Activated CD8-positive, alpha-beta T cell treated with anti-CD3 and anti-CD28 coated beads for 36 hours (primary cell): ENCODE measurements at regions of chr7 and their contacts with region 1.

Region 1: DNA sequence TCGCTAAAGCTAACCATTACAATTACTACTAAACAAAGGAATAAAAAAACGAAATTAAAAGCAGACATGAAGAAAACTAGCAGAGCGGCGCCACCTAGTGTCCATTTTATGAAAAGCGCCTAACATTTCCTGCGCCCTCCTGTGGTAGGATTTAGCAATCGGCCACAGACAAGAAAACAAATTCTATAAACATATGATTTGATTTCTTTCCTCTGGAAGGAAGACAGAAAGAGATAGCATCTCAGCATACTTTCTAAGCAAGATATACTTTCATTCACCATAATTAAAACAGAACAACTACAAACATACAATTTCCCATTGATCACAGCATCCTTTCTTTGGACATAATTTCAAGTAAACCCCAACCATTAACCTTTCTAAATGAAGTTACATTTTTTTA is 337.7 kb upstream of the NPVF start:
- DNase-seq: peak; percentile 75
- ATAC-seq: peak; percentile 27
- H3K4me3 Mint-ChIP-seq: no peak overlapping the region
- H3K27ac Mint-ChIP-seq: no peak overlapping the region
- H3K4me1 Mint-ChIP-seq: peaks cover 1% of the 10 kb centered on the region
- H3K27me3 Mint-ChIP-seq: no peaks in the 10 kb centered on the region
- CTCF ChIP-seq: peak; percentile 100

Region 2: GRCh38 chr7:25389489-25390106 is 176.4 kb before region 1 on chr7:
- CTCF ChIA-PET with region 1: interaction called, 136 read pairs
- POLR2A ChIA-PET with region 1: no interaction called
- intact Hi-C with region 1: loop called (anchors 2 kb)
- DNase-seq: peak; percentile 11
- ATAC-seq: no peak
- H3K4me3 Mint-ChIP-seq: no peak overlapping the region
- H3K27ac Mint-ChIP-seq: no peak overlapping the region
- H3K4me1 Mint-ChIP-seq: no peaks in the 10 kb centered on the region
- H3K27me3 Mint-ChIP-seq: peaks cover 2% of the 10 kb centered on the region
- CTCF ChIP-seq: peak; percentile 42

Region 3: GRCh38 chr7:25512061-25512687 is 53.8 kb before region 1 on chr7:
- CTCF ChIA-PET with region 1: no interaction called
- POLR2A ChIA-PET with region 1: no interaction called
- intact Hi-C with region 1: no loop called
- DNase-seq: no peak
- ATAC-seq: no peak
- H3K4me3 Mint-ChIP-seq: no peak overlapping the region
- H3K27ac Mint-ChIP-seq: no peak overlapping the region
- H3K4me1 Mint-ChIP-seq: no peaks in the 10 kb centered on the region
- H3K27me3 Mint-ChIP-seq: no peaks in the 10 kb centered on the region
- CTCF ChIP-seq: no peak

Region 4: DNA sequence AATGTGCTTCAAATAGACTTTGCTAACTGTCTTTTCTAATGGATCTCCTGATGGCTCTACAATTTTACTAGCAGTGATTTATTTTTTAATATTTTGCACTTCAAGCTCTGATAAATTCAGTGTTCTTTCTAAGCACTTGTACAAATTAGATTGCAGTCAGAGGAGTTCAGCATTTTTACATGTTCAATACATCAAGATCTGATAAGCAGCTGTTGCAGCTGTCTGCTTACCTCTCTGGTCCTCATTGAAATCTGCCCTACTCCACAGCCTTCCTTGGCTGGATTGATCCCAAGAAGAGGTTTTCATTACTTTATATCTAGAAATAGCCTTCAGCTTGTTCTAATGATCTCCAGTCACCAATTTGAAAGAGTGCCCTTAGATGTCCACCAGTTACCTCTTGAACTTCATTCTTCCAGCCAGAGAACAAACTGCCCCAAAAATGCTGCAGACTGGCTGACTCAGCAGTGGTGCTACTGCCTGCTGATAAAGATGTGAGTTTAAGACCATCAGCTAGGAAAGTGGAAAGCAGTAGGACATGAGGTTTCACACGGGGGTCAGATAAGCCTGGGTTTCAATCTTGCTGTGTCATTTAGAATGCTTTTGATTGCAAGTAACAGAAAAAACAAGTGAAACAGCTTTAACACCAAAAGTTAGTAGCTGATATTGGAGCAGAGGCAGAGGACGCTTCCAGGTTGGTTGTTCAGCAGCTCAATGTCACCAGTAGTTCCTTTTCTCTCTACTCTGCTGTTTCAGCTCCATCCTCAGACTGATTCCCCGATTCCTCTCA is 13.2 kb after region 1 on chr7:
- CTCF ChIA-PET with region 1: interaction called, 18 read pairs
- POLR2A ChIA-PET with region 1: interaction called, 3 read pairs
- intact Hi-C with region 1: no loop called
- DNase-seq: no peak
- ATAC-seq: no peak
- H3K4me3 Mint-ChIP-seq: no peak overlapping the region
- H3K27ac Mint-ChIP-seq: no peak overlapping the region
- H3K4me1 Mint-ChIP-seq: no peaks in the 10 kb centered on the region
- H3K27me3 Mint-ChIP-seq: no peaks in the 10 kb centered on the region
- CTCF ChIP-seq: no peak

Region 5: DNA sequence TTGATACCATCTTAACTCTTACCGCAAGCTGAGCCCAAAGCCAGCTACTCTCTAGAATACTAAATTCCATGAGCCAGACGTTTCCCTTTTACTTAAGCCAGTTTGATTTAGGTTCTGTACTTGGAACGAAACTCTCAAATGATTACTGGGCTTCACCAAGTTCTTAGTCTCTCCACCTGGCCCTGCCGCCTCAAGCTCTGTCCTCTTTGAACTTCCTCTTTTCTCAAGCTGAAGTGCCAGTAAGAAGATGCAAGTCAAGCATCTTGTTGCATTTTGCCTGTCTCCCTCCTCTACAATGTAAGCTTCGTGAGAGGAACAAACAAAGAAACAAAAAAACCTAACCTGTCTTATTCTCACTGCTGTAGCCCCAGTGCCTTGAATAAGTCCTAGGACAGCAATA is 20.6 kb after region 1 on chr7:
- CTCF ChIA-PET with region 1: interaction called, 18 read pairs
- POLR2A ChIA-PET with region 1: interaction called, 3 read pairs
- intact Hi-C with region 1: no loop called
- DNase-seq: no peak
- ATAC-seq: no peak
- H3K4me3 Mint-ChIP-seq: no peak overlapping the region
- H3K27ac Mint-ChIP-seq: no peak overlapping the region
- H3K4me1 Mint-ChIP-seq: no peaks in the 10 kb centered on the region
- H3K27me3 Mint-ChIP-seq: peaks cover 8% of the 10 kb centered on the region
- CTCF ChIP-seq: no peak